Right cardiac atrium (tissue), 5 donors: ENCODE measurements at regions of chr15 and their contacts with region 1.

Region 1: DNA sequence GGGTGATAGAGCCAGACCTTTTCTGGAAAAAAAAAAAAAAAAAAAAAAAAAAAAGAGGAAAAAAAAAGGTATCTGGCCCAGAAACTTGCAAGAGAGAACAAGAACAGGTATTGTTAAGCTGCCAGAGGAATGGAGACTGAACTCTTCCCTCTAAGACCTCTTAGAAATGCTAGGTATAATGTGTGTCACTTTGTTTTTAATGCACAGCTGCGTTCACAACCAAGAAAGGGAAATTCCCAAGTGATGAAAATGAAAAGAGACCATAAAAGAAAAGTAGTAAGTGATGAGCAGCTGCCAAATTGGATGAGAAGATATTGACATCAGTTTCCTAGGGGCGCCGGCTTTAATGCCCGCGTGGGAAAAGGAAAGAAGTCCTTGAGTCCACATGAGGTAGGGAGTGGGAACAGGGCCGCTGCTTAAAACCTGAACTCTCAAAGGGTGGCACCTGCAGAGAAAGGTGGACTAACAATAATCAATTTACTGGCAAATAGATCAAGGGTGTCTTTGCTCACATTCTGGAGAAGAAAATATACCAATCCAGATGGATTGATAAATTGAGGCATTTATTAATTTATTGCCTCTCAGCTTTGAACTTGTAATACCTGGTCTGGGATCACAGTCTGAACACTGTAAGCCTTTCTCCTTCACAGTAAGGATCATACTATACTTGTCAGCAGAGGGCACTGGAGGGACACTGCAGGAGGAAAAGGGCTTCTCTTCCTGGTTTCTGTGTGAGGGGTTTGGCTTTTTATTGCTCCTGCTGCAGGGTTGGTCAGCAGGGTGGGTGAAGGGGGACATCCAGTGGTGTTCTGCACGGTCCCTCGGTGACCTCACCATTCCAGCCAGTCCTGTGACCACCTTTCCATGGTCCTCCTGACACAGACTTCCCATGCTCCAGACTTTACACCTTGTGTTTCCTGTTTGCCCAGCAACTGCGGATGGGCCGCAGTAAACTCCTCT is 131.6 kb downstream of the AQP9 start:
- DNase-seq: no peak
- ATAC-seq: peak; percentile 85 to 91
- H3K4me3 ChIP-seq: no peak overlapping the region
- H3K27ac ChIP-seq: peak overlapping the region; percentile 75
- H3K4me1 ChIP-seq: peaks cover 3% of the 10 kb centered on the region
- H3K27me3 ChIP-seq: no peaks in the 10 kb centered on the region

Region 2: GRCh38 chr15:58086491-58086890 is 183.2 kb before region 1 on chr15:
- intact Hi-C with region 1: no loop called
- DNase-seq: no peak
- ATAC-seq: no peak
- H3K4me3 ChIP-seq: no peak overlapping the region
- H3K27ac ChIP-seq: no peak overlapping the region
- H3K4me1 ChIP-seq: no peaks in the 10 kb centered on the region
- H3K27me3 ChIP-seq: no peaks in the 10 kb centered on the region

Region 3: DNA sequence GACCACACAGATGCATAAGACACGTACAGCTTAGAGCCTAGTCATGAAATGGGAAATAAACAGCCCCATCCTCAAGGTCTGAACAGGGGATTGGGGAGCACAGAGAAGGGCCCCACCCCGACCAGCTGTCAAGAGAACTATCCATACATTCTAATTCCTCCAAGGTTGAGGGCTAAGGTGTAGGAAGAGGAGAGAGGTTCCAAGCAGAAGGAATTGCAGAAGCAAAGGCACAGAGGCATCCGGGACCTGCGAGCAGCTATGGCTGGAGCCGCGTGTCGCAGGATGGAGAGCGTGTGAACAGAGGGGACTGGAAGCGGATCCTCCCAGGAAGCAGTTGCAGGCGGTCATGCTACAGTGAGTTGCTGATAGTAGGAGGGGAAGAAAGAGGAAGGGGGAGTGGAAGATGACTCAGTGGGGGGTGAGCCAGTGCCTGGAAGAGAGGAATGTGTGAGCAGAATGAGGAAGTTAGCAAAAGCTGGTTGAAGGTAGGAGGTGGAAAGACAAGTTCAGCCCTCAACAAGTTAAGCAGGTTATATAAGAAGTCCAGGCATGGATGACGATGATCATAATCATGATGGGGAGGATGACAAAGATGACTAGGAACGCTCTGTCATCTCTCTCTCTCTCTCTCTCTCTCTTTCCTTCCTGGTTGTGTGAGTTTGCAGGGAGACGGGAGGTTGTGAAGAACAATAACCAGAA is 251.7 kb after region 1 on chr15:
- intact Hi-C with region 1: loop called in 1 of 4 experiments (anchors 10 kb)
- DNase-seq: peak; percentile 65 to 77 (median 71)
- ATAC-seq: peak; percentile 66 to 77
- H3K4me3 ChIP-seq: no peak overlapping the region
- H3K27ac ChIP-seq: peak overlapping the region; percentile 9
- H3K4me1 ChIP-seq: peaks cover 14% of the 10 kb centered on the region
- H3K27me3 ChIP-seq: no peaks in the 10 kb centered on the region

Region 4: DNA sequence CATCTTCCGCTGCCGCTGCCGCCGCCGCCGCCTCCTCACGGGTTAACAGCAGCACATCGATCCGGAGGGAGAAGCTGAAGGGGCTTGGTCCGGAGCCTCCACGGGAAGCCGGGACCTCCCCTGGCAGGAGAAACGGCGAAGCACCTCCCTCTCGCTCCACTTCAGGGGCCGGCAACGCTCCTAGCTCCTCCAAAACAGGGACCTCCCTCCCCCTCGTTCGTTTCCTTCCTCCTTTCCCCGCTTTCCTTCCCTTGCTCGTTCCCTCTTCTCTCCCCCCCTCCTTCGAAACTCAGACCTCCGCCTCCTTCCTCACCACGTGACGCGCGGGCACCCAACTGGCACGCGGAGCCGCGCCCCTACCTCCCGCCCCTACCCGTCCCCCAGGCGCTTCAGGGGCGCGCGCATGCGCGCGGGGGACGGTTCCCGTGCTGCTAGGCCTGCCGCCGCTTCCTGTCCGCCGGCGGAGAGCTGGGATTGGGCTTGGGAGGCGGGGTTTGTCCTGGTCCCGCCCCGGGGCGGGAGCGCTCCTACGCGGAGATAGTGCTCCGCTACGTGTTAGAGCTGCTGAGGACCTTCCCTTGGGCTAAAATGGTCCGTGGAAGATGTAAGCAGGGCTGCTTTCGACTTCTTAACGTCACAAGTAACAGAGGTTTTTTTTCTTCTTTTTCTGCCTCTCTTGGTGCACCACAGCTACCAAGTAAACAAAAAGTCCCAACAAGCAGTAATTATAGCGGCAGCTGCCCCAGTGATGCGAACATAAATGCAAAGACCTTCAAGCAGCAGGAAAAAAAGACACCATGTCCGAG is 480.0 kb after region 1 on chr15 and contains the start of gene ADAM10:
- intact Hi-C with region 1: loop called in 1 of 4 experiments (anchors 10 kb)
- DNase-seq: peak; percentile 100
- ATAC-seq: peak; percentile 99
- H3K4me3 ChIP-seq: peak within 1 kb of the TSS; percentile 88
- H3K27ac ChIP-seq: peak within 1 kb of the TSS; percentile 91
- H3K4me1 ChIP-seq: no peaks in the 10 kb centered on the region
- H3K27me3 ChIP-seq: no peaks in the 10 kb centered on the region
- total RNA-seq, gene ADAM10: 91.8 to 103 (median 94.5) TPM